Spleen (tissue), 13 donors: ENCODE measurements at regions of chr7 and their contacts with region 1.

Region 1: GRCh38 chr7:64618785-64619456 is 47.0 kb upstream of the ZNF107 start:
- DNase-seq: no peak
- H3K4me3 ChIP-seq: no peak overlapping the region
- H3K27ac ChIP-seq: no peak overlapping the region
- H3K4me1 ChIP-seq: peaks cover 0 to 3% (median 0%) of the 10 kb centered on the region in 6 donors
- H3K27me3 ChIP-seq: no peaks in the 10 kb centered on the region
- CTCF ChIP-seq: peak; percentile 36 to 71 (median 66)
- POLR2A ChIP-seq: no peak

Region 2: GRCh38 chr7:64183126-64183742 is 435.7 kb before region 1 on chr7:
- intact Hi-C with region 1: loop called (anchors 10 kb)
- DNase-seq: no peak
- H3K4me3 ChIP-seq: no peak overlapping the region
- H3K27ac ChIP-seq: no peak overlapping the region
- H3K4me1 ChIP-seq: peaks cover 0 to 9% (median 0%) of the 10 kb centered on the region in 6 donors
- H3K27me3 ChIP-seq: peaks cover 0 to 35% (median 12%) of the 10 kb centered on the region in 7 donors
- CTCF ChIP-seq: peak; percentile 27 to 81 (median 68)
- POLR2A ChIP-seq: no peak

Region 3: DNA sequence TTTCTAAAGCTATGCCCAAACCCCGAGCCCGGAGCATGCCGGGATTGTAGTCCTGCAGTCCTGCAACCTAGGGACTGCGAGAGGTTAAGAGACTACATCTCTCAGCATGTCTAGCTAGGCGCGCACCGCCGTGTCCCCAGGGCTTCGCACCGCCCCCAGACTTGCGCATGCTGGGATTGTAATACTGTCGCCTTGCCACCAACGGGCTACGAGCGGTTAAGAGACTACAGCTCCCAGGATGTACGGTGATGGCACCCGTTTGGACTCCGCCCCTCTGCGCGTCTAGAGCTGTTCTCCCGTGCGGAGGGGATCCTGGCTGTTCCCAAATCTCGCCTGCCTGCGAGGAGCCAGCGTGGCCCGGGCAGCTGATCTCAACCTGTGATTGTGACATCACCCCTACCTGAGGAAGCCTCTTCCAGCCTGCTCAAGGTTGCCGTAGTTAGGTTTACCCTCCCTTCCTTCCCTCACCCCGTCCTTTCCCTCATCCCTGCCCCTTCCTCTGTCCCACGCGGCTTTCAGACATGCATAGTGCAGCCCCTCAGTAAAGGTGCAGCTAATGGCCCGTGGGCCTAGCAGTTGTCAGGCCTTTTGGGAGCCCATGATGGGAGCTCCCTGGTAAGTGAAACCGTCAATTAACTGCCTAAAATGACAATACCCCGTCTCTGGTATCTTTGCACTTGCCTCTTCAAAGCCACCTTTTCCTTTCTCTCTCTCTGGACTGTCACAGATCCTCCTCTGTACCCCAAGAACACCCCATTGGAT is 311.5 kb before region 1 on chr7:
- intact Hi-C with region 1: no loop called
- DNase-seq: peak; percentile 99
- H3K4me3 ChIP-seq: peak overlapping the region; percentile 40 to 77 (median 54)
- H3K27ac ChIP-seq: peak overlapping the region; percentile 73 to 94 (median 85)
- H3K4me1 ChIP-seq: peaks cover 0 to 26% (median 16%) of the 10 kb centered on the region in 6 donors
- H3K27me3 ChIP-seq: no peaks in the 10 kb centered on the region
- CTCF ChIP-seq: peak in 9 of 11 experiments; percentile 29 to 76 (median 55)
- POLR2A ChIP-seq: peak in 1 of 3 donors; percentile 44

Region 4: DNA sequence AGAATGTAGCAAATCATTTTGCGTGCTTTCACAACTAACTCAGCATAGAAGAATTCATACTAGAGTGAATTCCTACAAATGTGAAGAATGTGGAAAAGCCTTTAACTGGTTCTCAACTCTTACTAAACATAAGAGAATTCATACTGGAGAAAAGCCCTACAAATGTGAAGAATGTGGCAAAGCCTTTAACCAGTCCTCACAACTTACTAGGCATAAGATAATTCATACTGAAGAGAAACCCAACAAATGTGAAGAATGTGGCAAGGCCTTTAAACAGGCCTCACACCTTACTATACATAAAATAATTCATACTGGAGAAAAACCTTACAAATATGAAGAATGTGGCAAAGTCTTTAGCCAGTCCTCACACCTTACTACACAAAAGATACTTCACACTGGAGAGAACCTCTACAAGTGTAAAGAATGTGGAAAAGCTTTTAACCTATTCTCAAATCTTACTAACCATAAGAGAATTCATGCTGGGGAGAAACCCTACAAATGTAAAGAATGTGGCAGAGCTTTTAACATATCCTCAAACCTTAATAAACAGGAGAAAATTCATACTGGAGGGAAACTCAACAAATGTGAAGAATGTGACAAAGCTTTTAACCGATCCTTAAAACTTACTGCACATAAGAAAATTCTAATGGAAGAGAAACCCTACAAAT is 87.8 kb after region 1 on chr7:
- intact Hi-C with region 1: no loop called
- DNase-seq: no peak
- H3K4me3 ChIP-seq: no peak overlapping the region
- H3K27ac ChIP-seq: no peak overlapping the region
- H3K4me1 ChIP-seq: no peaks in the 10 kb centered on the region
- H3K27me3 ChIP-seq: no peaks in the 10 kb centered on the region
- CTCF ChIP-seq: no peak
- POLR2A ChIP-seq: no peak